Colonic mucosa (tissue), 4 donors: ENCODE measurements at regions of chr3 and their contacts with region 1.

Region 1: GRCh38 chr3:184017672-184018423 is at the start of gene ABCC5:
- DNase-seq: peak; percentile 94
- H3K4me3 ChIP-seq: peak within 1 kb of the TSS; percentile 98
- H3K27ac ChIP-seq: peak within 1 kb of the TSS; percentile 63
- H3K4me1 ChIP-seq: peaks cover 3% of the 10 kb centered on the region
- H3K27me3 ChIP-seq: no peaks in the 10 kb centered on the region
- CTCF ChIP-seq: peak; percentile 50
- total RNA-seq, gene ABCC5: 15.1 to 16.6 TPM

Region 2: DNA sequence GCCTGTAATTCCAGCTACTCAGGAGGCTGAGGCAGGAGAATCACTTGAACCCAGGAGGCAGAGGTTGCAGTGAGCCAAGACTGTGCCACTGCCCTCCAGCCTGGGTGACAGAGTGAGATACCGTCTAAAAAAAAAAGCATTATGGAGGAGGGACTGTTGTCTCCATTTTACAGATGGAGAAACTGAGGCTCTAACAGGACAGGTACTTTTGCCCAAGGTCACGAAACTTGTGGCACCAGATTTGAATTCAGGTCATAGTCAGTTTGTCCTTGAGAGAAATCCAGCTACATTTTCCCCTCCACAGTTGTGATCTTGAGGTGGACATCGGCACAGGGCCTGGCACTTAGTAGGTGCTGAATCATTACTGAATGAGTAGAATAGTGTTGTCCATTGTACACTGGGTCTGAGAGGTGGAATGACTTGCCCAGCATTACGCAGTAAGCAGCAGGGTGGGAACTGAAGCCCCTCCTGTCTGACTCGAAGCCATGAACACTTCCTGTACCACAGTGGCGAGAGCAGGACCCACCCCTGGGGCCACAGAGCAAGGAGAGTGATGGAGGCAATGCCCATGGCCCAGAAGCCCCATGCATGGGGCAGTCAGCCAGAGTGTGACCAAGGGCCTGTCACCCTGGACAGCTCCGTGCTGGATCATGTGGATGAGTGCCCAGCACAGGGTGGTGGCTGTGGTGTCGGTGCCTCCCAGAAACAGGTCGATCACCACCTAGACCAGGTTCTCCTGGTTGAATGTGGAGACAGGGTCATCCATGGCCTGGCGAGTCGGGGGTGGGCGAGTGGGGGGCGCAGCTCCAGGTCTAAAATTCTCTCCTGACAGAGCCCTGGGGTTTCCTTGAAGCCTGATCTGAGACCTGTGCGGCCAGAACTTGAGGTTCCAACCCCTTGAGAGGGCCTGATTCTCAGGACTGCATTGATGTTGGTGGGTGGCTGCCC is 112.7 kb before region 1 on chr3:
- intact Hi-C with region 1: loop called (anchors 2 kb)
- DNase-seq: no peak
- H3K4me3 ChIP-seq: no peak overlapping the region
- H3K27ac ChIP-seq: no peak overlapping the region
- H3K4me1 ChIP-seq: no peaks in the 10 kb centered on the region
- H3K27me3 ChIP-seq: no peaks in the 10 kb centered on the region
- CTCF ChIP-seq: no peak

Region 3: DNA sequence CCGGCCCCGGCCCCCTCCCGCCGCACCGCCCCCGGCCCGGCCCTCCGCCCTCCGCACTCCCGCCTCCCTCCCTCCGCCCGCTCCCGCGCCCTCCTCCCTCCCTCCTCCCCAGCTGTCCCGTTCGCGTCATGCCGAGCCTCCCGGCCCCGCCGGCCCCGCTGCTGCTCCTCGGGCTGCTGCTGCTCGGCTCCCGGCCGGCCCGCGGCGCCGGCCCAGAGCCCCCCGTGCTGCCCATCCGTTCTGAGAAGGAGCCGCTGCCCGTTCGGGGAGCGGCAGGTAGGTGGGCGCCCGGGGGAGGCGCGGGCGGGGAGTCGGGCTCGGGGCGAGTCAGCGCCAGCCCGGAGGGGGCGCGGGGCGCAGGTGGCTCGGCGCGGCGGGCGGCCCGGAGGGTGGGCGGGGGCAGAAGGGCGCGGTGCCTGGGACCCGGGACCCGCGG is 362.4 kb after region 1 on chr3:
- intact Hi-C with region 1: no loop called
- DNase-seq: peak; percentile 55
- H3K4me3 ChIP-seq: peak overlapping the region; percentile 28
- H3K27ac ChIP-seq: no peak overlapping the region
- H3K4me1 ChIP-seq: peaks cover 9% of the 10 kb centered on the region
- H3K27me3 ChIP-seq: peaks cover 30% of the 10 kb centered on the region
- CTCF ChIP-seq: no peak